GM13976 (cell line): ENCODE measurements at regions of chr5 and their contacts with region 1.

Region 1: GRCh38 chr5:119411935-119412602 is 40.2 kb upstream of the HSD17B4 start:
- DNase-seq: peak; percentile 25
- CTCF ChIP-seq: peak; percentile 85

Region 2: GRCh38 chr5:119016125-119016774 is 395.8 kb before region 1 on chr5:
- in situ Hi-C with region 1: loop called (anchors 10 kb)
- DNase-seq: no peak
- CTCF ChIP-seq: no peak